ENCODE measurements at regions of chr10 and their contacts with region 1.

Region 1: DNA sequence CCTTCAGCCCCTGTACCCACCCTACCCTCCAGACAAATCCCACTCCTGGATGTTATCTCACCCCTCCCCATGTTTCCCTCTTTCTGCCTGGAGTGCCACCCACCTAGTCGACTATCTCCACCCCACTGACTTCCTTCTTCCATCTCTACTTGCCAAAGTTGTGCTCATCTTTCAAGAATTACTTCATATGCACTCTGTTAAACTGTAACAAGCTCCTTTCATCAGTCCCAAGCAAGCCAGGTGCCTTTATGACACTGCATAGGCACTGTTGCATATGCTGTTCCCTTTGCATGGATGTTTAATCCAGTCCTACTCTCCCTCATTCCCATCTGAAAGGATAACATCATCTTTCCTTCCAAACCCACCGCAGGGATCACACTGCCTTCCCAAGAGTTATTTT is 8.9 kb upstream of the CDK1 start:
- DNase-seq: no peak
- H3K4me3 ChIP-seq: no peak overlapping the region
- H3K27ac ChIP-seq: no peak overlapping the region
- H3K4me1 ChIP-seq: no peaks in the 10 kb centered on the region; a peak in 1 of 7 replicates
- H3K27me3 ChIP-seq: no peaks in the 10 kb centered on the region
- CTCF ChIP-seq: no peak
- EP300 ChIP-seq: no peak
- POLR2A ChIP-seq: no peak
- RAD21 ChIP-seq: no peak

Region 2: DNA sequence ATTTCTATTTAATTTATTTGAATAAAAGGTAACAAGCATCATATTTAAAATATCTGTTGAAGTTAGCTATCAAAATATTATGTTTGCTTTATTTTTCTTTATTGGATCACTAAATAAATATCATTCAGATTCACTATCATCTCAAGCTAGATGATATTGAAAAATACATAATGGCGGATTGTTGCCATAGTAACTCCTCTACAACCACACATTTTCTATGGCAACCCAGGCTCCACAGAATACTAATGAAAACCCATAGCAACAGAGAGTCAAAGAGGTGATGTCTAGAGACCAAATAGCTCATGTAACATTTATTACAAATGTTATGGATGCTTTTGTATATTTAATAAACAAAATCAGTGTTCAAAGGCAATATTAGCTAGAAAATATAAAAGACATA is 140.1 kb before region 1 on chr10:
- CTCF ChIA-PET with region 1: interaction called, 15 read pairs
- POLR2A ChIA-PET with region 1: no interaction called
- DNase-seq: no peak
- H3K4me3 ChIP-seq: no peak overlapping the region
- H3K27ac ChIP-seq: no peak overlapping the region
- H3K4me1 ChIP-seq: no peaks in the 10 kb centered on the region
- H3K27me3 ChIP-seq: no peaks in the 10 kb centered on the region
- CTCF ChIP-seq: no peak
- EP300 ChIP-seq: no peak
- POLR2A ChIP-seq: no peak
- RAD21 ChIP-seq: no peak